ENCODE measurements at regions of chr3 and their contacts with region 1.

Region 1: GRCh38 chr3:105304487-105304886 is 62.2 kb upstream of the ALCAM start:
- DNase-seq: no peak
- CTCF ChIP-seq: no peak

Region 2: DNA sequence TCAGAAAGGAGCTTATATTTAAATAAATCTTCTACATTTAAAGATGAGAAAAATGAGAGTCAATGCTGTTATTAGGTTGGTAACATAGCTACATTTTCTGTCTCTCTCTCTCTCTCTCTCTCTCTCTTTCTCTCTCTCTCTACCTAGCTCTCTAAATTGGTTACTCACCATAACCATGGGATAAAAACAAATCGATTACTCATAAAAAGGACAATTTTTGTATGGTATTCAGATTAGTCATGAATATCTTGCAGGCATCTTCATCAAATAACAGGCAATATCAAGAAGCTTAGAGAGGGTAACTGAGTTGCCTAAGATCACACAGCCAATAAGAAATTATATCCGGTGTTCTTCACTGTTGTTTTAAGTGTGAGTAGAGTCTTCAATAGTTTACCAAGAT is 19.6 kb before region 1 on chr3:
- CTCF ChIA-PET with region 1: interaction called, 12 read pairs
- POLR2A ChIA-PET with region 1: no interaction called
- DNase-seq: no peak
- CTCF ChIP-seq: no peak

Region 3: DNA sequence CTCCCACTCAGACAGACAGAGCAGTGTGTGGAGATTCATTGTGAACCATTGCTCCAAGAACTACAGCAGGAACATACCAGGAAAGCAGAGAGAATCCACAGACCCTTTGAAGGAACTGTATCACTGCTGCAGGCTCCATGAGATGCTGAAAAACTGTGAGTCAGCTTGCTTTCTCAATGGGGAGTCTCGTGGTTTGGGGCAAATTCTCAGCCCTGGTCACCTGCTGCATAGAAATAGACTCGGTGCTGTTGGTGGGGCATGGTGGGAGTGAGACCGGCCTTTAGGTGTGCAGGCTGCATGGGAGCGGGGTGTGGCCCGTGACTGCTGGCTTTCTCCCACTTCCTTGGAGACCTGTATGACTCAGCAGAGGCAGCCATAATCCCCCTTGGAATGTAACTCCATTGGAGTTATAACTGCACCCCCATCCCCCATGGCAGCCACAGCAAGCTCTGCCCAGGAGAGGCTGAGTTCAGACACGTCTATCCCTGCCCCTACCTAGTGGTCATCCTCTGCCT is 97.9 kb after region 1 on chr3:
- CTCF ChIA-PET with region 1: no interaction called
- POLR2A ChIA-PET with region 1: no interaction called
- DNase-seq: no peak
- CTCF ChIP-seq: no peak

Measured in GM10248 (cell line).